PC-3 (cell line): ENCODE measurements at regions of chr2 and their contacts with region 1.

Region 1: DNA sequence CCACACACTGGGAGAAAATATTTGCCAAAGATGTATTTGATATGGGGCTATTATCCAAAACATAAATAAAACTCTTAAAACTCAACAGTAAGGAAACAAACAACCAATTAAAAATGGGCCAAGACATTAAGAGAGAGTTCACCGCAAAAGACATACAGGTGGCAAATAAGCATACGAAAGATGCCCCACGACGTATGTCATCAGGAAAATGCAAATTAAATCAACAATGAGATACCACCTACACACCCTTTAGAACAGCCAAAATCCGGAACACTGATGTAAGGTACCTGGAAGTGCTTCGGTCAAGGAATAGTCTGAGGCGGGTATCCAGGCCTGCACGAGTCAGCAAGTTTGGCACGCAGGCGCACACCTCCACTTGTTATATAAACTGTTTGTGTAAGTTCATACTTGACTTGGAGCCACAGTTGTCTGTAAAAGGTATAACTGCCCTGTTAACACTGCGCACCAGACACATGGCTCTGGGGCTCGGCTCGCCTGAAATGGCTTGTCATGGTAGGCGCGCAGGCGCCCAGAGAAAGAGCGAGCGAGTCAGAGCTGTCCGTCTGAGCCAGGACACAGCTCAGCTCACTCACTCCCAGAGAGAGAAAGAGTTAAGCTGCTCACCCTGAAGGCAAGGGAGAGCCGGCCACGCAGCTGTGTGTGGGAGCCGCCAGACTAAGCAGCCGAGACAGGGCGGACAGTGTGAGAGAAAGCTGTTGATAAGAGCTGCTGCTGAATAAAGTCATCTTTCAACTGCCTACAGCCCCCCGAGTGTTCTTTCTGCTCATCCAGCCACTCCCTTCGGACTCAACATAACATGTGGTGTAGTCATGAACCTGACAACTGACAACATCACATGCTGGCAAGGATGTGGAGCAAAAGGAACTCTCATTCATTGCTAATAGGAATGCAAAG is 87.3 kb downstream of the HNRNPLL start:
- DNase-seq: peak; percentile 85
- ATAC-seq: peak; percentile 93
- H3K4me3 ChIP-seq: peak overlapping the region; percentile 50
- H3K27ac ChIP-seq: peak overlapping the region; percentile 84
- H3K4me1 ChIP-seq: peaks cover 19% of the 10 kb centered on the region; the same call in 1 of the 2 replicates
- H3K27me3 ChIP-seq: no peaks in the 10 kb centered on the region
- CTCF ChIP-seq: no peak

Region 2: GRCh38 chr2:38636069-38636468 is 120.7 kb after region 1 on chr2:
- CTCF ChIA-PET with region 1: no interaction called
- POLR2A ChIA-PET with region 1: interaction called, 13 read pairs
- intact Hi-C with region 1: no loop called
- DNase-seq: no peak
- ATAC-seq: no peak
- H3K4me3 ChIP-seq: no peak overlapping the region
- H3K27ac ChIP-seq: no peak overlapping the region
- H3K4me1 ChIP-seq: no peaks in the 10 kb centered on the region
- H3K27me3 ChIP-seq: no peaks in the 10 kb centered on the region
- CTCF ChIP-seq: no peak